ENCODE measurements at regions of chr9 and their contacts with region 1.

Region 1: GRCh38 chr9:3732077-3733038 is 206.6 kb upstream of the RFX3 start:
- DNase-seq: peak; percentile 41
- H3K4me3 Mint-ChIP-seq: no peak overlapping the region
- H3K27ac Mint-ChIP-seq: peak overlapping the region; percentile 40
- H3K4me1 Mint-ChIP-seq: peaks cover 24% of the 10 kb centered on the region
- H3K27me3 Mint-ChIP-seq: no peaks in the 10 kb centered on the region

Region 2: DNA sequence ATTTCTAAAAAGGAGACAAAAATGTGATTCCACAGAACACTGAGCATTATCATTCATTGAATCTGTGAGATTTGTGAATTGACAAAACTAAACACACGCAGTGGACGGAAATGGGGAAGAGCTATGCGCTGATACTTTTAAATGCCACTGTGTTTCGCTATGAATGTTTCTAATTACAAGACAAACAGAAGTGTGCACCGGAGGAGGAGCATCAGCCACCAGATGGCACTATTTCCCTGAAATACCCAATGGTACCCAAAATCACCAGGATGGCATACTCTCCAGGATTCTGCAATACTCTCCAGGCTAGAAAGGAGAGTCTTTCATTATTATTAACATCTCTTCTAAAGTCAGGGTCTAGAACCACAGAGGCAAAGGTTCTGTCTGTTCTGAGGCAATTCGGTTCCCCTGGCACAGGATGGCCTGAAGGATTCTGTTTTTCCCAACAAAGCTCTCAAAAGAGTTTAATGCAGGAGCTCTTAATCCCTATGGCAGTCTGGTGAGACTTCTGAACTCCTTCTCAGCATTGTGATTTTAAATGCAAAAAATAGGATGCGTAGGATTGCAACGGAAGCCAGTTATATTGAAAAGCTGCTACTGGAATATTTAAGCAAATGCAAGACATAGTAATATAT is 874.7 kb before region 1 on chr9:
- intact Hi-C with region 1: loop called (anchors 5 kb)
- DNase-seq: peak; percentile 39
- H3K4me3 Mint-ChIP-seq: no peak overlapping the region
- H3K27ac Mint-ChIP-seq: no peak overlapping the region
- H3K4me1 Mint-ChIP-seq: peaks cover 10% of the 10 kb centered on the region
- H3K27me3 Mint-ChIP-seq: peaks cover 19% of the 10 kb centered on the region

Region 3: GRCh38 chr9:2991292-2991691 is 741.1 kb before region 1 on chr9:
- intact Hi-C with region 1: no loop called
- DNase-seq: no peak
- H3K4me3 Mint-ChIP-seq: no peak overlapping the region
- H3K27ac Mint-ChIP-seq: no peak overlapping the region
- H3K4me1 Mint-ChIP-seq: no peaks in the 10 kb centered on the region
- H3K27me3 Mint-ChIP-seq: peaks cover 4% of the 10 kb centered on the region

Region 4: DNA sequence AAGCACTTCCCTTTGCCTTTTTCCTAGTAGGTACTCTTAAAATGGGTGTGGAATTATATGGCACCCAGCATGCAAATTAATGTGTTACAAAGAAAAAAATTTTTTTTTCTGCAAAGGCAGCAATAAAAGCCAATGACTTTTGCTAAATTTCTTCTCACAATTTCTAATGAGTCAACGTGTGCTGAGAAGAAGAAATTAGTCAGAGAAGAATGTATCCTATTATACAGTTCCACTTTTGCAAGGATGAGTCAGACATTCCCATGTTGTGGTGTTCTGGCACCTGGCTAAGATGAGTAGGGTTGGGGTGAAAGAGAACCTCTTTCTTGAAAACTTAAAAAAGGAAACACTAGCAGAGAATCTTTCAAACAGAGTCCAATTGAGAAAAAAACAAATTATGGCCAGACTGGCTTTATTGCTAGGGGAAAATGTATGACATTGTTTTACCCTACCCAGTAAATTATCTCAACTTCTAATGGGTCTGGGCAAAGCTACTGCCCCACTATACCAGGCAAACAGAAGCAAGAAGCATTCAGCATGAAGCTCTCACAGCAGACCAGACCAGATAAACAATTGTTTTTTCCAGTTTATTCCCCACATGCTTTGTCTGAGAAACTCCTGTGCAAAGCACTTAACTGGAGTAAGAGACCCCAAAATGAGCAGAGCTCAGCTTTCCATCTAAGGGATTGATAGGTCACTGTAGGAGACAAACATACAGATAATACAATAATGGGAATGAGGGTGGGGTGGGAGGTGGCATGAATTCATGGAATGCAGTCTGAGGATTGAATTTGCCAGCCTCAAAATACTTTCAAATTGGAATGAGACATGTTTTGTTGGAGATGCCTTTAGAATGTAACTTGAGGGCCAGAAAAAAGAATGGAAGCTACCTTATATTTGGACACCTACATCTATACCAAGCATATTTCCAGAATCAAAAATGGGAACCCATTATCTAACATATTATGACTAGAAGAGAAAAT is 14.2 kb after region 1 on chr9:
- intact Hi-C with region 1: loop called (anchors 1 kb)
- DNase-seq: no peak
- H3K4me3 Mint-ChIP-seq: peak overlapping the region; percentile 4
- H3K27ac Mint-ChIP-seq: peak overlapping the region; percentile 83
- H3K4me1 Mint-ChIP-seq: peaks cover 41% of the 10 kb centered on the region
- H3K27me3 Mint-ChIP-seq: no peaks in the 10 kb centered on the region

Region 5: GRCh38 chr9:4117835-4118610 is 385.7 kb after region 1 on chr9:
- intact Hi-C with region 1: loop called (anchors 1 kb)
- DNase-seq: peak; percentile 13
- H3K4me3 Mint-ChIP-seq: no peak overlapping the region
- H3K27ac Mint-ChIP-seq: no peak overlapping the region
- H3K4me1 Mint-ChIP-seq: no peaks in the 10 kb centered on the region
- H3K27me3 Mint-ChIP-seq: no peaks in the 10 kb centered on the region

Region 6: DNA sequence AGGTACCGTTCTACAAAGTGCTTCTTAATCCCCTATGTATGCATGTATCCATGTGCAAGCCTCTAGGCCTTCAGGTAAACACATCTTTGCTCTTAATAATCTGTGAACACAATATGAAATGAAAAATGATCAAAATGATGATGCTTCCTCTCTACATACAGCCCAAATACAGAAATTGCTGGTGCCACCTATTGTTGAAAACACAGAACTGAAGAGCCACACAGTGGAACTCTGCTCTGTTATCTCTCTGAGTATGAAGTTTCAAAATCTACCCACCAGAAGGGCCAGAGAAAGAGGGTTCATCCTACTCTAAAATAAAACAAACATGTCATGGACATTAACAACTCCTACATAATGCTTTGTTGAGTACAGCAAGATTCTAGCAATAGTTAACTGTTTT is 496.2 kb after region 1 on chr9:
- intact Hi-C with region 1: loop called (anchors 1 kb)
- DNase-seq: no peak
- H3K4me3 Mint-ChIP-seq: no peak overlapping the region
- H3K27ac Mint-ChIP-seq: no peak overlapping the region
- H3K4me1 Mint-ChIP-seq: peaks cover 6% of the 10 kb centered on the region
- H3K27me3 Mint-ChIP-seq: peaks cover 7% of the 10 kb centered on the region

Region 7: DNA sequence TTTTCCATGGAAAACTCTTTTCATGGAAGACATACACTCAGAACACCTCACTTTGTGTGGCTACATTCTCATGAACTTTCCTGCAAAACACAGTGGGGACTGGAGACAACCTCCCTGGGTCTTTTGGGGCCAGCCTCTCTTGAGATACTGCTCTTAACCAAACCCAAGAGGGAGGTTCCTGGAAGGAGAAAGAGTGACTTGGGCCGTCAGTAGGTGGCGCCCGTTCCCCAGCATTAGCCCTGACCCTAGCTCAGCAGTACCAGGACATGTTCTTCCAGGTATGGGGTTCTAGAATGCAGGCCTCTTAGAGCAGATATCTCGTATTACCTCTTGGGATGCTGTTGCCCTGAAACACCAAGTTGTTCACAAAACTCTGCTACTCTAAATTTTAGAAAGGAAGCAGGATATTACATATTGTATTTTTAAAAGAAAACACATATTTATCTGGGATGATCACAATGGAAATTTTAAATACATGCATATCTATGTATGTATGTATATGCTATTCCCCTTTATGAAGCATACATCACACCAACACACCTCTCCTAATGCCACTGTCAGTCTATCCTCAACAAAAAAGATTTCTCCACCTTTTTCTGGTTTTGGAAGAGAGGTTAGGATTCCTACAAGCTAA is 583.3 kb after region 1 on chr9:
- intact Hi-C with region 1: loop called (anchors 2 kb)
- DNase-seq: peak; percentile 60
- H3K4me3 Mint-ChIP-seq: no peak overlapping the region
- H3K27ac Mint-ChIP-seq: no peak overlapping the region
- H3K4me1 Mint-ChIP-seq: peaks cover 5% of the 10 kb centered on the region
- H3K27me3 Mint-ChIP-seq: peaks cover 13% of the 10 kb centered on the region

Region 8: DNA sequence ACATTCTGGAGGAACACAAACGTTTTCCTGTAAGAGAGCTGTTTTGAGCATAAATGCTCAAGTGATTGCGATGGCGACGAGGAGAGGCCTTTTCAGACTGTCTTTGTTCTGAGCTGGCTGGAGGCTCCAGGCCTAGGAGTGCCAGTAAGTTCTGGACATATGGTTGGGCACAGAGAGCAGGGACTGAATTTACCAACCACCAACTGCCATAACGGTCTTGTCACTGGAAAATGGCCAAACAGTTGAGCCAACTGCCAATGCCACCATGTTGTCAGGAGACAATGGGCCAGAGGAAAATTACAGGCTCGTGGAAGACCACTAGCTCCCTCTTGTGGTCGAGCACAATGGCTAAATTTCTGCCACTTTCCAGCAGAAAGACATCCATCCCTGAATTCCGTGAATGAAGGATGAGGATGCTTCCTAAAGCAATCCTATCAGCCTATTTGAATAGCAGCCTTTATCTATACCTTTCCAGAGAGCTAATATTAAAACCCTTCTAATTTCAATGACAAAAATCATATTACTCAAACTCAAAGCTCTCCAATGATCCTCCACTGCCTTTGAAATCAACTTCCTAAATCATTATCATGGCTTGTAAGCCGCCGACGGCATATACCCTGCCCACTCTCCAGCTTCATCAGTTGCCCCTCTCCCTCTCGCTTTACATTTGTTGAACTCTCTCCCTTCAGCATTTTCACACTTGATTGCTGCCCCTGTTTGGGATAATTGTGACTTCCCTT is 634.4 kb after region 1 on chr9:
- intact Hi-C with region 1: loop called (anchors 1 kb)
- DNase-seq: no peak
- H3K4me3 Mint-ChIP-seq: no peak overlapping the region
- H3K27ac Mint-ChIP-seq: no peak overlapping the region
- H3K4me1 Mint-ChIP-seq: no peaks in the 10 kb centered on the region
- H3K27me3 Mint-ChIP-seq: peaks cover 6% of the 10 kb centered on the region

Region 9: DNA sequence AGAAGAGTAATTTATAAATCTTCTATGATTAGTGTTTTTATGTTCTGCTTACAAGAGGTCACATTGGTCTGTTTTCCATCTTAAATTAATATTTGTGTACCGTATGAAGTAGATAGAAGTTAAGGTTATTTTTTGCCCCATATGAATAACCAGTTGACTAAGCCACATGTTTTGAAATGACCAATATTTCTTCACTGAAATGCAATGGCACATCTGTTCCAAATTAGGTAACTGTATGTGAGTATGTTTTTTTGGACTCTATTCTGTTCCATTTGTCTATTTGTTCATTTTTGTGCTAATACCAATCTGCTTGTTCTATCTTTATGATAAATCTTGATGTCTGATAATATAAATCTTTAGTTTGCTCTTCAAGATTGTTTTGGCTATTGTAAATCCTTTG is 1270.5 kb after region 1 on chr9:
- intact Hi-C with region 1: no loop called
- DNase-seq: no peak
- H3K4me3 Mint-ChIP-seq: no peak overlapping the region
- H3K27ac Mint-ChIP-seq: no peak overlapping the region
- H3K4me1 Mint-ChIP-seq: peaks cover 42% of the 10 kb centered on the region
- H3K27me3 Mint-ChIP-seq: no peaks in the 10 kb centered on the region